Naive thymus-derived CD4-positive, alpha-beta T cell (primary cell): ENCODE measurements at regions of chr5 and their contacts with region 1.

Region 1: DNA sequence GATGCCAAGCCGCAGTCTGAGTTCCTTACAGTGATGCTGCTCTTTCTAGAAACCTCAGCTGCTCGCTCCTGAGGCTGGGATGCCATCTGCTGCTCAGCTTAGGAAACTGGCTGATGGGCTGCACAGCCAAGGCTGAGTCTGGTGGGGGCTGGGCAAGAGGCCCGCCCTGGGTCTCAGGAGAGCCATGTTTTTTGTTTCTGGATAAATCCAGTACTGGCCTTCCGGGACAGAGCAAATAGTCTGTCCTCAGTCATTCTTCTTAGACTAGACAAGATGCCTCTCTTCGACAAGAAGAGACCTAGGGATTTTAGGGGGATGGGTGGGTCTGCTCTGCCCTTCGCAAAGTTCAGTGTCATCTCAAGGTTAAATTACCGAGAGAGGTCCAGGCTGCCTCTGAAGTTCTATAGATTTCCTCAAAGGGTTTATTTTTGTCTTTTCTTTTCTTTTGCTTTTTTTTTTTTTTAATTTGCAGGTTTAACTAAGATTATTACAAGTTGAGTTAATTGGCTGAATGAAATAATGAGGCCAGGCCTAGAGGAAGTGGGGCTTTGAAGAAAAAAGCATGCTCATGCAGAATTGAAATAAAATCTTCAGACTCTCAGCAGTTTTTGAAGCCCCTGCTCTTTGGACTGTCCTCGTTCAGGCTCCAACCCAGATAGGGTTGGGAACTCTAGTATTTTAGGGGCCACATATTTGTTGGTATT is 30.6 kb upstream of the MATR3 start:
- DNase-seq: peak; percentile 28 to 76 (median 62)
- ATAC-seq: peak; percentile 98
- H3K4me3 ChIP-seq: no peak overlapping the region
- H3K4me3 Mint-ChIP-seq: no peak overlapping the region
- H3K27ac ChIP-seq: no peak overlapping the region
- H3K27ac Mint-ChIP-seq: no peak overlapping the region
- H3K4me1 ChIP-seq: no peaks in the 10 kb centered on the region
- H3K4me1 Mint-ChIP-seq: peaks cover 4 to 11% (median 6%) of the 10 kb centered on the region in 7 donors
- H3K27me3 ChIP-seq: no peaks in the 10 kb centered on the region
- H3K27me3 Mint-ChIP-seq: peaks cover 0 to 37% (median 14%) of the 10 kb centered on the region in 5 donors

Region 2: GRCh38 chr5:138449501-138450239 is 813.2 kb before region 1 on chr5:
- CTCF ChIA-PET with region 1: no interaction called
- POLR2A ChIA-PET with region 1: no interaction called
- intact Hi-C with region 1: loop called in 1 of 2 experiments (anchors 2 kb)
- DNase-seq: peak; percentile 24 to 89 (median 60)
- ATAC-seq: peak; percentile 91
- H3K4me3 ChIP-seq: no peak overlapping the region
- H3K4me3 Mint-ChIP-seq: peak overlapping the region in 4 of 10 donors; percentile 33 to 54 (median 46)
- H3K27ac ChIP-seq: no peak overlapping the region
- H3K27ac Mint-ChIP-seq: no peak overlapping the region
- H3K4me1 ChIP-seq: peaks cover 7% of the 10 kb centered on the region in 2 donors
- H3K4me1 Mint-ChIP-seq: peaks cover 0 to 9% (median 6%) of the 10 kb centered on the region in 7 donors
- H3K27me3 ChIP-seq: no peaks in the 10 kb centered on the region
- H3K27me3 Mint-ChIP-seq: peaks cover 0 to 3% (median 0%) of the 10 kb centered on the region in 5 donors

Region 3: DNA sequence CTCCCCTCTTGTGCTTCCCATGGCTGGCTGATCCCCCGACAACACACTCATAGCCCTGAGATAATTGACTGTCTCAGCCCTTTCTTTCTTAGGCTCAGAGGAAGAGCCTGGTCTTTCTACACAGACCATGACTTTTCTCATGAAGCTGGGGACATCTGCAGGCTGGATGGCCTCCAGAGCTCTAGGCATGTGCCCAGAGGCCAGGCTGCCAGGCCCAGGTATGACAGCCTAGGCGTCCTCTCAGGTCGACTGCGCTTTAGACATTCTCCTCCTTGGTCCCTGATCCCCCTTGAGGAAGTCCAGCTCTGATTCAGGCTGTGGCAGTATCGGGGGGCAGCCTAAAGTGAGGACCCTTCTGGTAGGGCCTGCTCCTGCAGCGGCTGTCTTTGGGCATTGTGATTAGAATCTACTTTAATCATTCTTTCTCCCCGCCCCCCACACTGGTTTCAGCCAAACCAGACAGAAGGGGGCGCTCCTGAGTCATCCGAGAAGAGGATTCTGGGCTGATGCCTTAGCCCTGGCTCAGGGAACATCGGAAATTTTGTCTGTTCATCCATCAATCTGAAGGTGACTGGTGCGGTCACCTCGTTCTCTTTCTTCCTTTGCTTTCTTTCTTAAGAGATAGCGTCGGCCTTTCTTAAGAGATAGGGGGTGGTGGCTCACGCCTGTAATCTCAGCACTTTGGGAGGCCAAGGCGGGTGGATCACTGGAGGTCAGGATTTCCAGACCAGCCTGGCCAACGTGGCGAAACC is 621.2 kb before region 1 on chr5:
- CTCF ChIA-PET with region 1: no interaction called
- POLR2A ChIA-PET with region 1: no interaction called
- intact Hi-C with region 1: loop called (anchors 1 to 2 kb)
- DNase-seq: peak; percentile 16 to 78 (median 47)
- ATAC-seq: peak; percentile 82
- H3K4me3 ChIP-seq: no peak overlapping the region
- H3K4me3 Mint-ChIP-seq: no peak overlapping the region
- H3K27ac ChIP-seq: no peak overlapping the region
- H3K27ac Mint-ChIP-seq: no peak overlapping the region
- H3K4me1 ChIP-seq: no peaks in the 10 kb centered on the region
- H3K4me1 Mint-ChIP-seq: peaks cover 0 to 3% (median 0%) of the 10 kb centered on the region in 7 donors
- H3K27me3 ChIP-seq: peaks cover 6 to 14% of the 10 kb centered on the region in 2 donors
- H3K27me3 Mint-ChIP-seq: peaks cover 64 to 89% (median 89%) of the 10 kb centered on the region in 5 donors

Region 4: DNA sequence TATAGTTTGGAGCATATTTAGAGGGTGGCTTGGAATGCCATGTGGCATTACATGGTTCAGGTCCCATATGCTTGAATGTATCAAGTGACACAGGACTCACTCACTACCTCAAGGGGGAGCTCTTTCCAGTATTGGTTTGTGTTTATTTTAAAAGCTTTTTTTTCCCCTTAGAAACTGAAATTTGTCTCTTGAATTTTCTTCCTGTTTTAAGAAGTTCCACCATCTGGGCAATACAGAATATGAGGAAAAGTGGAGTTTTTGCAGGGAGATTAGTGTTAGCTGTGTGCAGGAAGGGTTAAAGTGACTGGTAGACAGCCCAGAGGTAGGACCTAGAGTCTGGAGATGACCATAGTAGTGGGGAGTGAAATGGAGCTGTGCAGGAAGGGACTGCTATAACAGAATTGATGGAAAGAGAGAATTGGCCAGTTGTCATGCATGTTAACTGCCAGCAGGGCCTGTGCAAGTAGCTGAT is 473.1 kb before region 1 on chr5:
- CTCF ChIA-PET with region 1: no interaction called
- POLR2A ChIA-PET with region 1: no interaction called
- intact Hi-C with region 1: loop called (anchors 1 to 2 kb)
- DNase-seq: peak in 6 of 9 donors; percentile 4 to 42 (median 26)
- ATAC-seq: peak; percentile 61
- H3K4me3 ChIP-seq: no peak overlapping the region
- H3K4me3 Mint-ChIP-seq: peak overlapping the region in 1 of 10 donors; percentile 4
- H3K27ac ChIP-seq: no peak overlapping the region
- H3K27ac Mint-ChIP-seq: no peak overlapping the region
- H3K4me1 ChIP-seq: peaks cover 4 to 6% of the 10 kb centered on the region in 2 donors
- H3K4me1 Mint-ChIP-seq: peaks cover 10 to 30% (median 15%) of the 10 kb centered on the region in 7 donors
- H3K27me3 ChIP-seq: peaks cover 0 to 9% of the 10 kb centered on the region in 2 donors
- H3K27me3 Mint-ChIP-seq: peaks cover 17 to 80% (median 63%) of the 10 kb centered on the region in 5 donors

Region 5: DNA sequence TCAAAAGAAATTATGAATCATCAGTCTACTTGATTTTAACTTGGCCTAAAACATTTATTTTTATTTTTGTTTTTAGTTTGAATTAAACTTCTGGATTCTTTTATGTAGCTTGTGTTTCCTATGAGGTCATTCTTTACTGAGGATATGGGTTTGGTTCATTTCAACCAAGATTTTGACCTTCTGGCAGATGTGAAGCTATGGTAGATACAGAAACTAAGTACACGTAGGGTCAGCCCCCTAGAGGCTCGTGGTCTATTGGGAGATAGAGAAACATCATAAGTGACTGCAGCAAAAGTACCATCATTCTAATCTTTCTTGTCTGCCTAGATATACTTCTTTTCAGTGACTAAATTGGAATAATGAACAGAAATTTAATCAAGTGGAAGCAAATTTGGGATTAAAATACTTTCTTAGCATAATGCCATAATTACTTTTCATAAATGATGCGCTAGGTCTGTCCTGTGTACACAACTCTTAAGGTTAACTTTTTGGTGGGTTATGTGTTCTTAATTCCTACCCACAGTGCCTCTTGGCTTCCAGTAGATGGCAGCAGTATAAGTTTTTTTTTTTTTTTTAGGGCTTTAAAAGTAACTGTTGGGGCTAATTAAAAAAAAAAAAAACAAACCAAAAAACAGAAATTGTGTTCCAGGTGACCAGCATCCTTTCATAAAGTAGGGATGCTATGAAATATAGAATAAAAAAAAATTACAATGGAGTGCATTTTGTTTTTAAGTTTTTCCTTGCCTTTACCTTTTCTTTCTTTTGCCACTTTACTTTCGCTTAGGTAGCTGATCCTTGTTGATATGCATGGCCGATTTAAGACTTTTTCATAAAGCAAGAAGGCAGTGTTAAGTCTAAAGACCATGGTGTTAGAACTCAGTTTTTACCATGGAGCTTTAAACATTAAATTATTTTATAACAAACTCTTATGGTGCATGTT is 437.7 kb before region 1 on chr5:
- CTCF ChIA-PET with region 1: interaction called, 11 read pairs
- POLR2A ChIA-PET with region 1: no interaction called
- intact Hi-C with region 1: loop called in 1 of 2 experiments (anchors 1 kb)
- DNase-seq: peak in 4 of 9 donors; percentile 5 to 25 (median 18)
- ATAC-seq: no peak
- H3K4me3 ChIP-seq: no peak overlapping the region
- H3K4me3 Mint-ChIP-seq: no peak overlapping the region
- H3K27ac ChIP-seq: no peak overlapping the region
- H3K27ac Mint-ChIP-seq: no peak overlapping the region
- H3K4me1 ChIP-seq: no peaks in the 10 kb centered on the region
- H3K4me1 Mint-ChIP-seq: peaks cover 0 to 4% (median 0%) of the 10 kb centered on the region in 7 donors
- H3K27me3 ChIP-seq: no peaks in the 10 kb centered on the region
- H3K27me3 Mint-ChIP-seq: peaks cover 6 to 31% (median 18%) of the 10 kb centered on the region in 5 donors

Region 6: GRCh38 chr5:138869763-138870500 is 393.0 kb before region 1 on chr5:
- CTCF ChIA-PET with region 1: interaction called, 5 read pairs
- POLR2A ChIA-PET with region 1: no interaction called
- intact Hi-C with region 1: loop called in 1 of 2 experiments (anchors 2 kb)
- DNase-seq: no peak
- ATAC-seq: no peak
- H3K4me3 ChIP-seq: no peak overlapping the region
- H3K4me3 Mint-ChIP-seq: no peak overlapping the region
- H3K27ac ChIP-seq: no peak overlapping the region
- H3K27ac Mint-ChIP-seq: no peak overlapping the region
- H3K4me1 ChIP-seq: peaks cover 0 to 12% of the 10 kb centered on the region in 2 donors
- H3K4me1 Mint-ChIP-seq: peaks cover 6 to 17% (median 12%) of the 10 kb centered on the region in 7 donors
- H3K27me3 ChIP-seq: no peaks in the 10 kb centered on the region
- H3K27me3 Mint-ChIP-seq: peaks cover 29 to 46% (median 37%) of the 10 kb centered on the region in 5 donors

Region 7: GRCh38 chr5:139251281-139251687 is 11.6 kb before region 1 on chr5:
- CTCF ChIA-PET with region 1: no interaction called
- POLR2A ChIA-PET with region 1: no interaction called
- intact Hi-C with region 1: loop called in 1 of 2 experiments (anchors 1 kb)
- DNase-seq: peak in 1 of 9 donors; percentile 37
- ATAC-seq: peak; percentile 41
- H3K4me3 ChIP-seq: no peak overlapping the region
- H3K4me3 Mint-ChIP-seq: no peak overlapping the region
- H3K27ac ChIP-seq: no peak overlapping the region
- H3K27ac Mint-ChIP-seq: no peak overlapping the region
- H3K4me1 ChIP-seq: no peaks in the 10 kb centered on the region
- H3K4me1 Mint-ChIP-seq: peaks cover 5 to 19% (median 9%) of the 10 kb centered on the region in 7 donors
- H3K27me3 ChIP-seq: no peaks in the 10 kb centered on the region
- H3K27me3 Mint-ChIP-seq: peaks cover 0 to 4% (median 0%) of the 10 kb centered on the region in 5 donors